Transverse colon (tissue), 4 donors: ENCODE measurements at regions of chr12 and their contacts with region 1.

Region 1: GRCh38 chr12:70576346-70577282 is 60.6 kb downstream of the PTPRB start:
- DNase-seq: no peak
- H3K4me3 ChIP-seq: no peak overlapping the region
- H3K27ac ChIP-seq: no peak overlapping the region
- H3K4me1 ChIP-seq: peaks cover 0 to 2% (median 0%) of the 10 kb centered on the region in 4 donors
- H3K27me3 ChIP-seq: no peaks in the 10 kb centered on the region
- CTCF ChIP-seq: peak; percentile 68 to 79 (median 76)
- EP300 ChIP-seq: no peak
- POLR2A ChIP-seq: no peak

Region 2: GRCh38 chr12:69879041-69879960 is 697.3 kb before region 1 on chr12:
- in situ Hi-C with region 1: loop called in 1 of 4 experiments (anchors 10 kb)
- intact Hi-C with region 1: loop called (anchors 5 kb)
- DNase-seq: peak; percentile 75
- H3K4me3 ChIP-seq: peak overlapping the region in 2 of 4 donors; percentile 7 to 24
- H3K27ac ChIP-seq: no peak overlapping the region
- H3K4me1 ChIP-seq: peaks cover 0 to 7% (median 3%) of the 10 kb centered on the region in 4 donors
- H3K27me3 ChIP-seq: no peaks in the 10 kb centered on the region
- CTCF ChIP-seq: peak; percentile 83 to 91 (median 85)
- EP300 ChIP-seq: no peak
- POLR2A ChIP-seq: no peak